ENCODE measurements at regions of chr4 and their contacts with region 1.

Region 1: GRCh38 chr4:2091990-2092668 is 33.0 kb downstream of the NAT8L start:
- DNase-seq: no peak
- H3K4me3 ChIP-seq: no peak overlapping the region
- CTCF ChIP-seq: no peak

Region 2: DNA sequence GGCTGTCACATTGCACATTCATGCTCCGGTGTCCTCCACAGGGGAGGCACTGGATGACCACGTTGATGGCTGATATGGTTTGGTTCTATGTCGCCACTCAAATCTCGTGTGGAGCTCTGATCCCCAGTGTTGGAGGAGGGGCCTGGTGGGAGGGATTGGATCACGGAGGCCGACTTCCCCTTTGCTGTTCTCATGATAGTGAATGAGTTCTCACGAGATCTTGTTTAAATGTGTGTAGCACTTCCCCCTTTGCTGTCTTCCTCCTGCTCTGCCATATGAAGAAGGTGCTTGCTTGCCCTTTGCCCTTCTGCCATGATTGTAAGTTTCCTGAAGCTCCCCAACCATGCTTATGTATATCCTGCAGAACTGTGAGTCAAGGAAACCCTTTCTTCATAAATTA is 55.3 kb before region 1 on chr4:
- in situ Hi-C with region 1: loop called (anchors 5 kb)
- DNase-seq: no peak
- H3K4me3 ChIP-seq: no peak overlapping the region
- CTCF ChIP-seq: no peak

Region 3: DNA sequence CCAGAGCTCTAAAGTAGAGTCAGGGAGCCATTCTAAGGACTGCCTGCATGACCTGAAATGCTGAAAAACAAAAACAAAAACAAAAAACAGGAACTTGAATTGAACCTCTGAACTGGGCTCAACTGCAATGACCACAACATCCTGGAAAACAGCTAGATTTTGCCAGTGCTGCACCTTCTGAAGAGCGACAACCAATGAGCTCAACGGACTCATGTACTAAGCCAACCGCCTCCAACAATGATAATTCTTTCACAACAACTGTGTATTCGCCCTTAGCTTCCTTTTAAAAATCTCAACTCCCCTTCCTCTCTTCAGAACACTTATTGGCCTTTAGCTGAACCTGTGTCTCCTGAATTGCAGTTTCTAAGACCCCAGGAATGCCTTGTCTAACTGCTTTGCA is 80.0 kb after region 1 on chr4:
- in situ Hi-C with region 1: no loop called
- DNase-seq: no peak
- H3K4me3 ChIP-seq: no peak overlapping the region
- CTCF ChIP-seq: no peak

Region 4: GRCh38 chr4:2441393-2442174 is 349.5 kb after region 1 on chr4:
- in situ Hi-C with region 1: no loop called
- DNase-seq: no peak
- H3K4me3 ChIP-seq: no peak overlapping the region
- CTCF ChIP-seq: peak; percentile 73

Region 5: GRCh38 chr4:3013839-3014350 is 921.8 kb after region 1 on chr4:
- in situ Hi-C with region 1: no loop called
- DNase-seq: no peak
- H3K4me3 ChIP-seq: no peak overlapping the region
- CTCF ChIP-seq: no peak